ENCODE measurements at regions of chr17 and their contacts with region 1.

Region 1: GRCh38 chr17:55356434-55357328 is 65.0 kb downstream of the MMD start:
- DNase-seq: peak; percentile 93
- ATAC-seq: peak; percentile 100
- H3K4me3 ChIP-seq: no peak overlapping the region
- H3K27ac ChIP-seq: no peak overlapping the region
- H3K4me1 ChIP-seq: no peaks in the 10 kb centered on the region
- H3K27me3 ChIP-seq: no peaks in the 10 kb centered on the region
- CTCF ChIP-seq: peak; percentile 96

Region 2: DNA sequence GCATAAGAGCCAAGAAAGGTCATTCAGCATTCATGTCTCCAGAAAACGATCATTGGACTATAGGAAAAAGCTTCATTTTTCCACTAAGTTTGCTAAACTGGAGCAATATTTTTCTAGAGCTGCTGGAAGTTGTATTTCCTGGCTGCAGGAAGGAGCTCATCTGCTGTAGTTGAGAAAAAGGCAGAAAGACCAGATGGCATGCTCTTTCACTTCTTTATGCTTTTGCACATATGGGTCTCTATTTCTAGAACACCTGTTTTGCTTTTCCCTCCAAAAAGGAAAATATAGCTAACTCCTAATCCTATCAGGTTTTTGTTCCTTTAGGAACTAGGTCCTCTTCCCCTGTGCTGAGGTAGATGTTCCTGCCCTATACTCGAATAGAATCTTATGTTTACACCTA is 153.8 kb before region 1 on chr17:
- CTCF ChIA-PET with region 1: no interaction called
- POLR2A ChIA-PET with region 1: interaction called, 11 read pairs
- intact Hi-C with region 1: no loop called
- DNase-seq: no peak
- ATAC-seq: no peak
- H3K4me3 ChIP-seq: no peak overlapping the region
- H3K27ac ChIP-seq: no peak overlapping the region
- H3K4me1 ChIP-seq: no peaks in the 10 kb centered on the region
- H3K27me3 ChIP-seq: no peaks in the 10 kb centered on the region
- CTCF ChIP-seq: no peak

Region 3: DNA sequence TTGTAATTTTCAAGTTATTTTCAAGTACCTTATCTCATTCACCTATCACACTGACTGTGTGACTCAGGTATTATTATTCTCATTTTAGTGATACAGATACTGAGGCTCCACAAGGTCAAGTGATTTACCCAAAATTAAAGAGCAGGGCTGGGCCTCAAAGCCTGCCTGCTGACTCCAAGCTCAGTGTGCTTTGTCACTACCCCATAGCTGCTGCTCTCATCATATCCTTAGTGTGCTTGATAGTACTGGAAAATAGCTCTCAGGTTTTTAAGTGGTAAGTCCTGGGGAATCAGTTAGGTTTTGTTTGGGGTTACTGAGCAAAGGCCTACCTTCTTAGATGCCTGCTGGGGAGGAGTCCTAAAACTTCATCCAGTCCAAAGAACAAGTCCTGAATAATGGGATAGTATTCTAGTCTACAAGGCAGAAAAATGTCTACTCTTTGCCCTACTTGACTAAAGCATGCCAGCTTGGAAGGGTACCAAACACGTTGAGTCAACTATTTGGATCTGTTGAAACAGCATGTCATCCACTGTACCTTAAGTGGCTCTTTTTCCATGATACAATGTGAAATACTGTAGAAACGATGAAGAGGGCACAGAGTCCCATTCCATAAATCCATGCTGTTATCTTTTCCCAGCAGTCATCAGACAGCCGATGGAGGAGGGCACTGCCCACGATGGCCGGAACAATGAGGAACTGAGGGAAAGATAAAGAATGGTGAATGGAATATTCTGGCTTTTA is 54.2 kb after region 1 on chr17:
- CTCF ChIA-PET with region 1: no interaction called
- POLR2A ChIA-PET with region 1: no interaction called
- intact Hi-C with region 1: loop called (anchors 5 kb)
- DNase-seq: peak; percentile 97
- ATAC-seq: peak; percentile 89
- H3K4me3 ChIP-seq: no peak overlapping the region
- H3K27ac ChIP-seq: peak overlapping the region; percentile 29
- H3K4me1 ChIP-seq: peaks cover 24% of the 10 kb centered on the region
- H3K27me3 ChIP-seq: no peaks in the 10 kb centered on the region
- CTCF ChIP-seq: no peak

Region 4: DNA sequence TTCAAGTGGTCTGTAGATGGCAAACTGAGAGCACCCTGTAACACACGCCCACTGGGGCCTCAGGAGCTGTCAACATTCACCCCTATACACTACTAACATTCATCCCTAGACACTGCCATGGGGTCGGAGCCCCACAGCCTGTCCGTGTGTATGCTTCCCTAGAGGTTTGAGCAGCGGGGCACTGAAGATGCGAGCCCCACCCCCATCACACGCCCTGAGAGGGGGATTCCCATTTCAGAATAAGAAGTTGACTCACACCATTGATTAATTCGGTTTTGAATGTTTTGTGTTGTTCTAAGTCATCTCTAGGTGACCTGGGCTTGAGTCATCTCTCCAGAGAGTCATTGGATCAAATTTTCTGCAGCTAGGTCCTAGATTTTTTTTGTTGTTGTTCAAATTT is 102.3 kb after region 1 on chr17:
- CTCF ChIA-PET with region 1: no interaction called
- POLR2A ChIA-PET with region 1: no interaction called
- intact Hi-C with region 1: loop called (anchors 5 kb)
- DNase-seq: peak; percentile 95
- ATAC-seq: peak; percentile 54
- H3K4me3 ChIP-seq: no peak overlapping the region
- H3K27ac ChIP-seq: peak overlapping the region; percentile 77
- H3K4me1 ChIP-seq: peaks cover 46% of the 10 kb centered on the region
- H3K27me3 ChIP-seq: no peaks in the 10 kb centered on the region
- CTCF ChIP-seq: no peak

Region 5: GRCh38 chr17:55496094-55496881 is 139.6 kb after region 1 on chr17:
- CTCF ChIA-PET with region 1: interaction called, 3 read pairs
- POLR2A ChIA-PET with region 1: no interaction called
- intact Hi-C with region 1: loop called (anchors 5 kb)
- DNase-seq: no peak
- ATAC-seq: no peak
- H3K4me3 ChIP-seq: no peak overlapping the region
- H3K27ac ChIP-seq: no peak overlapping the region
- H3K4me1 ChIP-seq: peaks cover 16% of the 10 kb centered on the region
- H3K27me3 ChIP-seq: no peaks in the 10 kb centered on the region
- CTCF ChIP-seq: no peak

Measured in PC-3 (cell line).